Ascending aorta (tissue), 2 donors: ENCODE measurements at regions of chr15 and their contacts with region 1.

Region 1: DNA sequence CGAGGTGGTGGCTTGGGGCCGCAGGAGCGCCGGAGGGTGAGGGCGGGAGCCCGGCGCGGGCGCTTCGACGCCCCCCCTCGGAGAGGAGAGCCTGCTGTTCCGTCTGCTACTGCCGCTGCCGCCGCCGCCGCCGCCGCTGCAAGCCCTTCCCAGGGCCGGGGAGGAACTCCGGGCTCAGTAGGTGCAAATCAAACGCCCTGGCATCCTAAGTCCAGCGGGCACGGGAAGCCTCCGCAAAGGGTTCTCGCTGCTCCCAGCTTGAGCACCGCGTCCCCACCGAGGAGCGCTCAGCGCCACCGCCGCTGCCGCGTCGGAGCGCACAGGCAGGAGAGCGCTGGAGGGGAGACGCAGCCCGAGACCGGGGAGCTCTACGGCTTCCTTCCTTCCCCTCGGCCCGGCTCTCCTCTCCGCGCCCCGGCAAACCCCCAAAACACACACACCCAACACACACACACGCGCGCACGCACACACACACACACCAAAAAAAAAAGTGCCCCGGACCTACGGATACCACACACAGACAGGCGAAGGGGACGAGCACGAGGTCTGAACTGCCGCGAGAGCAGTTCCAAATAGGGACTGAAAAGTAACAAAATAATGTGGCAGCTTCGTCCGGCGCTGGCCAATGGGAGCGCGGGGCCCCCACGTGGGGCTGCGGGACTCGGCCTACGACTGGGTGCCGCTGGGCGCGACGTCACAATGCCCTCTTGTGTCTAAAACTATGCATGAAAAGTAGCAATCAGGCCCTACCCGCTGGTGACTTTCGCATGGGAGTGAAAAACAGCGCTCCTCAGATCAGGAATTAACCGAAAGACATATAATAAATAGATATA is at the start of gene TLE3:
- DNase-seq: peak; percentile 99 to 100
- H3K4me3 ChIP-seq: peak within 1 kb of the TSS; percentile 85 to 89
- H3K27ac ChIP-seq: peak within 1 kb of the TSS; percentile 92 to 94
- H3K4me1 ChIP-seq: peaks cover 11 to 41% of the 10 kb centered on the region in 2 donors
- H3K27me3 ChIP-seq: no peaks in the 10 kb centered on the region
- CTCF ChIP-seq: peak; percentile 36 to 48 (median 45)
- total RNA-seq, gene TLE3: 76.4 TPM

Region 2: GRCh38 chr15:69452692-69453521 is 644.6 kb before region 1 on chr15 and contains the start of gene RPLP1:
- intact Hi-C with region 1: no loop called
- DNase-seq: peak; percentile 88 to 98
- H3K4me3 ChIP-seq: peak within 1 kb of the TSS; percentile 87 to 89
- H3K27ac ChIP-seq: peak within 1 kb of the TSS; percentile 96 to 97
- H3K4me1 ChIP-seq: peaks cover 8 to 17% of the 10 kb centered on the region in 2 donors
- H3K27me3 ChIP-seq: no peaks in the 10 kb centered on the region
- CTCF ChIP-seq: no peak
- total RNA-seq, gene RPLP1: 379 TPM

Region 3: DNA sequence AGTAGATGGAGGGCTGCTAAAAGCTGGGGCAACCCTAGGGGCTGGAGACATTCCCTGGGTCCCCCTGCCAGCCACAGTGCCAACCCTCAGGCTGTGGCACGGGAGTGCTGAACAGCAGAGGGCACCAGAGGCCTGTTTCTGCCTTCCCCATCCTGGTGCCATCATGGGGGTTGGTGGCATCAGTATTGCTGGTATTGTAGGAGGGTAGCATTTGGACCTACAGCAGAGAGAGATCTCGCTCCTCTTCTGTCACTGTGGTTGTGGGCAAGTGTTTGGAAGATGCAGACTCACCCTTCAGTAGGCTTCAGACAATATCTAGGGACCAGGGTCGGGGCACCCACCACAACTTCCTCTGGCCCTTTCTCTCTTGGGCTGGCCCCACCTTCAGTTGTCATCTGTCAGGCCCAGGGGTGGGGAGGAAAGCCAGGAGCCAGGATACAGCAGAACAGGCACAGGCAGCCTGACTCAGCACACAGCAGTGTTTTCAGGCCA is 521.5 kb before region 1 on chr15:
- intact Hi-C with region 1: loop called (anchors 5 kb)
- DNase-seq: peak in 1 of 2 donors; percentile 77
- H3K4me3 ChIP-seq: no peak overlapping the region
- H3K27ac ChIP-seq: no peak overlapping the region
- H3K4me1 ChIP-seq: peaks cover 5 to 12% of the 10 kb centered on the region in 2 donors
- H3K27me3 ChIP-seq: no peaks in the 10 kb centered on the region
- CTCF ChIP-seq: peak; percentile 76 to 84 (median 83)

Region 4: DNA sequence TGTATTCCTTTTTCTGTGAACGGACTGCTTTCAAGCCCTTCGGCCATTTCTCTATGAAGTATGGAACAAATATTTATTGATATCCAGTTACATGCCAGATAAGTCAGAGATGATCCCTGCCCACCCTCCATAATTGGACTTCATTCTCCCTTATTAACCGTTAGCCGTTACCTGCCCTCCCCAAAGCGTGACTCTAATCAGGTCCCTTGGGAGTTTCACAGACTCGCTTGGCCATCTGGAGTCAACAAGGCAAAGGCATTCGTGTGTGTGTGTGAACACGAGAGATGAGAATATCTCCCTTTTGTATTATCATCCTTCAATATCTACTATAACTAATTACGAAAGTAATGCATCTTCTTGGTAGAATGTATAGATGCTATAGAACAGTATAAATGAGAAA is 314.3 kb before region 1 on chr15:
- intact Hi-C with region 1: no loop called
- DNase-seq: no peak
- H3K4me3 ChIP-seq: no peak overlapping the region
- H3K27ac ChIP-seq: no peak overlapping the region
- H3K4me1 ChIP-seq: no peaks in the 10 kb centered on the region
- H3K27me3 ChIP-seq: no peaks in the 10 kb centered on the region
- CTCF ChIP-seq: no peak

Region 5: GRCh38 chr15:69794645-69795461 is 302.7 kb before region 1 on chr15:
- intact Hi-C with region 1: loop called (anchors 2 kb)
- DNase-seq: peak; percentile 42 to 86
- H3K4me3 ChIP-seq: peak overlapping the region in 1 of 2 donors; percentile 50
- H3K27ac ChIP-seq: peak overlapping the region; percentile 98 to 99
- H3K4me1 ChIP-seq: peaks cover 0 to 28% of the 10 kb centered on the region in 2 donors
- H3K27me3 ChIP-seq: no peaks in the 10 kb centered on the region
- CTCF ChIP-seq: no peak

Region 6: DNA sequence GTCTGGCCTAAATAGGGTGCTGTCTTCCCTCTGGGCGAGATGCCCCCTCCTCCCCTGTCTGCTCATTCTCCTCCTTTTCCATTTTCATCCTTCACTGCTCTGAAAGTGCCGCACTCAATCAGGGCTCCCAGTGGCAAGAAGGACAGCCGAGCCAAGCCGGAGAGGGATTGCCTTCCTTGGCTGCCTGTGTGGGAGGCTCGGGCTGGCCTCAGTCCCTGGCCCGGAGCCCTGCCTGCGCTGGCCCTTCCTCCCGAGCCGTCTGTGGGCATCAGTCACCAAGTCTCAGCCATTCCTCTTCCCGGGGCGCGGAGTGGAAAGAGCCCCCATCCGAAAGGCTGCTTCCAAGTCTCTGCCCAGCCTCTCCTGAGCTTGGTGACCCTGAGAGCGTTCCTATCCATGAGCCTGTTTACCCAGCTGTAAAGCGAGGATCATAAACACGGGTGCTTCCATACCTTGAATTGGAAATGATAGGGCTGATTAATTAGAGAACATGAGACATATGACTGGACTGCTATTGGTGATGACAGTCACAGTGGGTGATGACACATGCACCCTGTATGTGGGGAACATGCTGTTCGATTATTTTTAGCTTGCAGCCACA is 59.2 kb after region 1 on chr15:
- intact Hi-C with region 1: loop called (anchors 2 kb)
- DNase-seq: peak in 1 of 2 donors; percentile 81
- H3K4me3 ChIP-seq: peak overlapping the region in 1 of 2 donors; percentile 12
- H3K27ac ChIP-seq: peak overlapping the region in 1 of 2 donors; percentile 26
- H3K4me1 ChIP-seq: peaks cover 12 to 20% of the 10 kb centered on the region in 2 donors
- H3K27me3 ChIP-seq: no peaks in the 10 kb centered on the region
- CTCF ChIP-seq: no peak

Region 7: GRCh38 chr15:70196314-70197291 is 99.0 kb after region 1 on chr15:
- intact Hi-C with region 1: loop called (anchors 5 kb)
- DNase-seq: no peak
- H3K4me3 ChIP-seq: no peak overlapping the region
- H3K27ac ChIP-seq: peak overlapping the region; percentile 77 to 85
- H3K4me1 ChIP-seq: peaks cover 4 to 20% of the 10 kb centered on the region in 2 donors
- H3K27me3 ChIP-seq: no peaks in the 10 kb centered on the region
- CTCF ChIP-seq: no peak

Region 8: DNA sequence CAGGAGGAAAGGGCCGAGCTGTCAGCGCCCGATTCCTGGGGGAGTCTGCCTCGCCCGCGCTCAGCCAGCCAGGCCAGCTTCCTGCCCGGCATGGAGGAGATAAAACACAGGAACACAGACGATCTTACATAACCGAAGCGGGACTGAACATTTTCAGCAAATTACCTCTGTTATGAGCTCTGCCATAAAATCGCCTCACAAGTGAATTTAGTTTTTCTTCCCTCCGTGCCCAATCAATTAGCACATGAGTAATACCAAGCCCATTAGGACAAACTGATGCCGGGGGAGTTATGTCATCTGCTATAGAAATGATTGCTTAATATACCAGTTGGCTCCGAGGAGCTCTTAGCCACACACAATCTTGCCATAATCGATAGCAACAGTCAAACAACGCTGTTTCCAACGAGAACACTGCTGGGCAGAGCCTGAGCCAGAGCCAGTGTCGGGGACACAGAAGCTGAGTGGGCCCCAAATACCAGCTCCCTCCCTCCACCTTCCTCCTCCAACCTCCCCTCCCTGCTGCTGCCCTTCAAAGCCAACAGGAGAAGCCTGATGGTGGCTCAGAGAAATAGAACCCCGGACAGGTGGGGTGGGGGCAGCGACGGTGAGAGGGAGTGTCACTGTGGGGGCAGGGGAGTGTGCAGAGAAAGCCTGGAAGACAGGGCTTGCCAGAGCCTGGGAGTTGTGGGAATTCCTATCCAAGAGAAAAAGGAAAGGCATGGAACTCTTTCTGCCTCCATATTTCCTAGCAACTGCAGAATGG is 279.6 kb after region 1 on chr15:
- intact Hi-C with region 1: loop called (anchors 5 kb)
- DNase-seq: peak in 1 of 2 donors; percentile 66
- H3K4me3 ChIP-seq: peak overlapping the region; percentile 25 to 52
- H3K27ac ChIP-seq: peak overlapping the region; percentile 49 to 50
- H3K4me1 ChIP-seq: peaks cover 0 to 21% of the 10 kb centered on the region in 2 donors
- H3K27me3 ChIP-seq: no peaks in the 10 kb centered on the region
- CTCF ChIP-seq: no peak